ENCODE measurements at regions of chr10 and their contacts with region 1.

Region 1: GRCh38 chr10:5023177-5023805 is 19.6 kb upstream of the AKR1C2 start:
- DNase-seq: no peak

Region 2: GRCh38 chr10:5094265-5095205 is 71.2 kb after region 1 on chr10 and contains the start of gene AKR1C3:
- in situ Hi-C with region 1: loop called (anchors 10 kb)
- DNase-seq: peak; percentile 94
- total RNA-seq, gene AKR1C3: 3,253 and 3,825 TPM in 2 replicates